ENCODE measurements at regions of chr7 and their contacts with region 1.

Region 1: GRCh38 chr7:69843653-69844052 is 245.4 kb downstream of the AUTS2 start:
- DNase-seq: no peak
- ATAC-seq: no peak
- H3K4me3 ChIP-seq: no peak overlapping the region
- H3K4me3 Mint-ChIP-seq: no peak overlapping the region
- H3K27ac ChIP-seq: no peak overlapping the region
- H3K27ac Mint-ChIP-seq: no peak overlapping the region
- H3K4me1 ChIP-seq: no peaks in the 10 kb centered on the region
- H3K4me1 Mint-ChIP-seq: peaks cover 0 to 1% (median 0%) of the 10 kb centered on the region in 3 donors
- H3K27me3 ChIP-seq: no peaks in the 10 kb centered on the region
- H3K27me3 Mint-ChIP-seq: peaks cover 0 to 10% of the 10 kb centered on the region in 2 donors

Region 2: GRCh38 chr7:68800316-68800715 is 1043.3 kb before region 1 on chr7:
- CTCF ChIA-PET with region 1: interaction called in 1 of 2 experiments, 11 read pairs
- POLR2A ChIA-PET with region 1: no interaction called
- DNase-seq: no peak
- ATAC-seq: no peak
- H3K4me3 ChIP-seq: no peak overlapping the region
- H3K4me3 Mint-ChIP-seq: no peak overlapping the region
- H3K27ac ChIP-seq: no peak overlapping the region
- H3K27ac Mint-ChIP-seq: no peak overlapping the region
- H3K4me1 ChIP-seq: no peaks in the 10 kb centered on the region
- H3K4me1 Mint-ChIP-seq: no peaks in the 10 kb centered on the region
- H3K27me3 ChIP-seq: no peaks in the 10 kb centered on the region
- H3K27me3 Mint-ChIP-seq: no peaks in the 10 kb centered on the region

Measured in T-cell (primary cell).